ENCODE measurements at regions of chr9 and their contacts with region 1.

Region 1: DNA sequence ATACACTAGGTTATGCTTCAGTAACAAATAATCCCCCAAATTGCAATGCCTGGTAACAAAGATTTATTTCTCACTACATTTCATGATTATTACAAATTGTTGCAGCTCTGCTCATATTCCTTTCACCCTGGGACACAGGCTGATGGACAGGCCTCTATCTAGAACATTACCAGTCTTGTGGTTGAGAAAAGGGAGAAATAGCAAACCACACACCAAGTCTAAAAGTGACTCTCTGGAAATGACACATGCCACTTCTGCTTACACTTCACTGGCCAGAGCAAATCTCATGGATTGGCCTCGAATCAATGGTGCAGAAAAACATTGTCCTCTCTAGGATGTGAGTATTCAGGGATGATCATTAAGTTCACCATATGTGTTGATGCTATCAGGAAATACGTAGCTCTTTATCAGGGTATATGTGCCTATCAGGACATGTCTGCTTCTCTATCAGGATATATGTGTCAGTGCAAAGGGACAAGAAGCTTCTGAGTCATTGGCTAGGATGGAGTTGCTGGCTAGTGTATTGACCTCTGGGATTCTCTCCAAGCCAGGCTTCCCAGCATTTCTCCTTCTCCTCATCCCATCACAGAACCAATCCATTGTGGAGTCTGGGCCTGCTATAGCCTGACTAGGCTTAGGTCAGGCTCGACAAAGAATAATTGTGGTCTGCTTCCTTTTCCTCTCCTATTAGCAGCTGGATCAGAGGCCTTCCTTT is 91.1 kb upstream of the CEP78 start:
- DNase-seq: no peak
- ATAC-seq: no peak
- H3K4me3 Mint-ChIP-seq: no peak overlapping the region
- H3K27ac Mint-ChIP-seq: no peak overlapping the region
- H3K4me1 Mint-ChIP-seq: peaks cover 1% of the 10 kb centered on the region
- H3K27me3 Mint-ChIP-seq: no peaks in the 10 kb centered on the region
- CTCF ChIP-seq: no peak

Region 2: DNA sequence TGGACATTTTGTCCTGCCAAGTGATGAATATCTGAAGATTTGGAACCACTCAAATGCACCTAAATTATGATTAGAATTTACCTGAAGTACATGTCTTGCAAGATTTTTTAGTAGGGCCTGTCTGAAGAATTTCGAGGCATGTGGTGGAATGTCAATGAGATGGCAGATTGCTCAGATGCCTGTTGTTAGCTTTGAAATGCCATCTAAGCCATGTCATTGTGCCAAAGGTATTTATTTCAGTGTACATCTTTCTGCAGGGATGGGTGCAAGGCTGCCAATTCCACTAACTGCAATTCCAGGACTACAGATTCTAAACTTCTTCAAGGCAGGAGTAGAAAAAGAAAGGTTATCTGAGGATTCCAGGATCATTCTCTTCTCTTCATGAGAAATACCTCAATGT is 104.1 kb before region 1 on chr9:
- CTCF ChIA-PET with region 1: no interaction called
- POLR2A ChIA-PET with region 1: no interaction called
- intact Hi-C with region 1: no loop called
- DNase-seq: no peak
- ATAC-seq: no peak
- H3K4me3 Mint-ChIP-seq: no peak overlapping the region
- H3K27ac Mint-ChIP-seq: no peak overlapping the region
- H3K4me1 Mint-ChIP-seq: no peaks in the 10 kb centered on the region
- H3K27me3 Mint-ChIP-seq: peaks cover 28% of the 10 kb centered on the region
- CTCF ChIP-seq: no peak

Region 3: GRCh38 chr9:78089101-78089500 is 55.7 kb before region 1 on chr9:
- CTCF ChIA-PET with region 1: no interaction called
- POLR2A ChIA-PET with region 1: no interaction called
- intact Hi-C with region 1: loop called (anchors 10 kb)
- DNase-seq: no peak
- ATAC-seq: no peak
- H3K4me3 Mint-ChIP-seq: no peak overlapping the region
- H3K27ac Mint-ChIP-seq: no peak overlapping the region
- H3K4me1 Mint-ChIP-seq: no peaks in the 10 kb centered on the region
- H3K27me3 Mint-ChIP-seq: peaks cover 4% of the 10 kb centered on the region
- CTCF ChIP-seq: no peak